ENCODE measurements at regions of chr5 and their contacts with region 1.

Region 1: GRCh38 chr5:65624571-65625555 is at the starts of genes SHLD3 and TRAPPC13:
- DNase-seq: peak; percentile 70 to 96 (median 83)
- ATAC-seq: peak; percentile 72
- H3K4me3 ChIP-seq: peak within 1 kb of the TSS; percentile 80 to 84
- H3K4me3 Mint-ChIP-seq: peak within 1 kb of the TSS; percentile 97
- H3K27ac ChIP-seq: peak within 1 kb of the TSS; percentile 78 to 91
- H3K27ac Mint-ChIP-seq: peak within 1 kb of the TSS; percentile 99
- H3K4me1 ChIP-seq: peaks cover 26% of the 10 kb centered on the region
- H3K4me1 Mint-ChIP-seq: peaks cover 56% of the 10 kb centered on the region
- H3K27me3 ChIP-seq: no peaks in the 10 kb centered on the region
- H3K27me3 Mint-ChIP-seq: no peaks in the 10 kb centered on the region
- CTCF ChIP-seq: no peak
- total RNA-seq, gene SHLD3: 11.6 to 14.5 TPM
- total RNA-seq, gene TRAPPC13: 11.9 to 17.6 TPM

Region 2: DNA sequence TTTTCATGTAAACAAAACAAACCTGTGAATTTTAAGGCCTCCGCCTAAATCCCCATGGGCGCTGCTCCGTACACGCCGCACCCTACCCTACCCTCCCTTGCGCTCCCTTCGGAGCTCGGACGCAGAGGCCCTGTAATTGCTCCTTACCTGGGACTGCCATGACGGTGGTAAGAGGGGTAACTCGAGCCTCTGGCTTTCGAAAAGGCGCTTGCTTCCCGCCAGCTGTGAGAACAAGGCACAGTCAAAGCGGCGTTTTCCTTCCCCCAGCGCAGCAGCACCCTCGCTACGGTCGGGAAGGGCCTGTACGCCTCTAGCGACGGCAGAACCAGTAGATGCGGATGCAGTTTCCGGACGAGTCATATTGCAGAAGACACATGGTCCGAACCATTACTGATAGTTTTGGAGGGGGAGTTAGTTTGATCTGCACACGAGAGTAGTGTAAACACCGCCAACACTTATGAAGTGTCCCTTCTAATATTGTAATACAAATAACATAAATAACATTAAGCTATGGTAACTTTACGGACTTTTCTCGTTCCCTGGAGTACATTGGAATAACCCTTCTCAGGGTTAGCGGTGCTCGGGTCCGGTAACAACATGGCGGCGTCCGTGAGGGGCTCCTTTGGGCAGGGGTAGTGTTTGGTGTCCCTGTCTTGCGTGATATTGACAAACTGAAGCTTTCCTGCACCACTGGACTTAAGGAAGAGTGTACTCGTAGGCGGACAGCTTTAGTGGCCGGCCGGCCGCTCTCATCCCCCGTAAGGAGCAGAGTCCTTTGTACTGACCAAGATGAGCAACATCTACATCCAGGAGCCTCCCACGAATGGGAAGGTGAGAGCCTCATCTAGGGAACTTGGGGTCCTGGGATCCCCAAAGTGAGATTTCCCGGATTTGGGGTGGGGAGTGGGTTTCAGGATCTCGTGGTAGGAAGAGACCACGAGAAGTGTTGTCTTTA is 856.2 kb before region 1 on chr5 and contains the starts of genes CWC27 and SREK1IP1:
- CTCF ChIA-PET with region 1: no interaction called
- POLR2A ChIA-PET with region 1: interaction called, 3 read pairs
- intact Hi-C with region 1: loop called (anchors 2 to 5 kb)
- DNase-seq: peak; percentile 63 to 92 (median 80)
- ATAC-seq: peak; percentile 96
- H3K4me3 ChIP-seq: peak within 1 kb of the TSS; percentile 78 to 93
- H3K4me3 Mint-ChIP-seq: peak within 1 kb of the TSS; percentile 100
- H3K27ac ChIP-seq: peak within 1 kb of the TSS; percentile 85 to 90
- H3K27ac Mint-ChIP-seq: peak within 1 kb of the TSS; percentile 97
- H3K4me1 ChIP-seq: peaks cover 39% of the 10 kb centered on the region
- H3K4me1 Mint-ChIP-seq: peaks cover 66% of the 10 kb centered on the region
- H3K27me3 ChIP-seq: no peaks in the 10 kb centered on the region
- H3K27me3 Mint-ChIP-seq: no peaks in the 10 kb centered on the region
- CTCF ChIP-seq: no peak
- total RNA-seq, gene CWC27: 15.5 to 16.6 TPM
- total RNA-seq, gene SREK1IP1: 20.4 to 26.5 TPM

Region 3: GRCh38 chr5:65035211-65036206 is 589.4 kb before region 1 on chr5:
- CTCF ChIA-PET with region 1: interaction called, 3 read pairs
- POLR2A ChIA-PET with region 1: no interaction called
- intact Hi-C with region 1: loop called (anchors 1 to 10 kb)
- DNase-seq: peak; percentile 62 to 95 (median 83)
- ATAC-seq: peak; percentile 76
- H3K4me3 ChIP-seq: peak overlapping the region; percentile 57 to 60
- H3K4me3 Mint-ChIP-seq: peak overlapping the region; percentile 95
- H3K27ac ChIP-seq: peak overlapping the region; percentile 83 to 96
- H3K27ac Mint-ChIP-seq: peak overlapping the region; percentile 89
- H3K4me1 ChIP-seq: peaks cover 20% of the 10 kb centered on the region
- H3K4me1 Mint-ChIP-seq: peaks cover 32% of the 10 kb centered on the region
- H3K27me3 ChIP-seq: no peaks in the 10 kb centered on the region
- H3K27me3 Mint-ChIP-seq: no peaks in the 10 kb centered on the region
- CTCF ChIP-seq: no peak

Region 4: GRCh38 chr5:65562731-65563701 is 61.8 kb before region 1 on chr5 and contains the starts of genes CENPK and PPWD1:
- CTCF ChIA-PET with region 1: no interaction called
- POLR2A ChIA-PET with region 1: interaction called, 24 read pairs
- intact Hi-C with region 1: loop called (anchors 1 kb)
- DNase-seq: peak; percentile 83 to 98 (median 95)
- ATAC-seq: peak; percentile 97
- H3K4me3 ChIP-seq: peak within 1 kb of the TSS; percentile 74 to 82
- H3K4me3 Mint-ChIP-seq: peak within 1 kb of the TSS; percentile 100
- H3K27ac ChIP-seq: peak within 1 kb of the TSS; percentile 97 to 98
- H3K27ac Mint-ChIP-seq: peak within 1 kb of the TSS; percentile 100
- H3K4me1 ChIP-seq: peaks cover 37% of the 10 kb centered on the region
- H3K4me1 Mint-ChIP-seq: peaks cover 42% of the 10 kb centered on the region
- H3K27me3 ChIP-seq: no peaks in the 10 kb centered on the region
- H3K27me3 Mint-ChIP-seq: no peaks in the 10 kb centered on the region
- CTCF ChIP-seq: no peak
- total RNA-seq, gene CENPK: 5.1 to 5.3 TPM
- total RNA-seq, gene PPWD1: 78.8 to 81.5 TPM

Region 5: DNA sequence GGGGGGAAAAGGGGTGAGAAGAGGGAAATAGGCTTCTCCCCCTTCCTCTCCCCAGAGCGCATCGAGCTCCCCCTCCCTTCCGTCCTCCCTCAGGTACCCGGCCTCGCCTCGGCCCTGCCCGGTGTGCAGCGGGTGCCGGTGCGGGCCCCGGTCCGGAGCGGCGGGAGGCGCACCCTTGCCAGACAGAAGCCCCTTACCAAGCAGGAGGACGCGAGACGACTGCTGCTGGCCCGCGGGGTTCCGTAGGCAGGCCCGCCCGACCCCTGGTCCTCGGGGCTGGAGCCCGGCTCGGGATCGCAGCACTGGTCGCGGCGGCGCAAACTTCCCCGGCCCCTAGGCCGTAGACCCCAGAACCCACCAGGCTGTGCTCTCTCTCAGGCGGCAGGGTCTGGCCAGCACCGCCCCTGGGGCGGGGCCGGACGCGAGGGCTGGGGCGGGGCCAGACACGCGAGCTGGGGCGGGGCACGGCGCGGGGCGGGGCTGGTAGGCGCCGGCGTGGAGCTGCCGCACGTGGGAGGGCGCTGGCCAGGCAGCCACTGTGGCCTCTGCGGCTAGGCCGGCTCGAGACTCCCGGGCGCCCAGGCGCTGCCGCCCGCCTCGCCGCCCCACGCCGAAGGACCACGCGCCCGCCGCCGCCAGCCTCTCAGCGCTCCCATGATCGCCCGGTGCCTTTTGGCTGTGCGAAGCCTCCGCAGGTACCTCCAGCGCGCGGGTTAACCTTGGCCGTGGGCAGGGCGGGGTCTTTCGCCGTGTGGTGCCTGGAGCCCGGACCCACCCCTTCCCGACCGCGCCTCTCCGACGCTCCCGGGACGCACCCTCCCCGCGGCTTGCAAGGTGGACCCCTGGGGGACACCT is 97.1 kb after region 1 on chr5 and contains the starts of genes NLN and SGTB:
- CTCF ChIA-PET with region 1: no interaction called
- POLR2A ChIA-PET with region 1: no interaction called
- intact Hi-C with region 1: loop called (anchors 1 to 2 kb)
- DNase-seq: peak; percentile 72 to 90 (median 84)
- ATAC-seq: peak; percentile 91
- H3K4me3 ChIP-seq: peak within 1 kb of the TSS; percentile 82 to 86
- H3K4me3 Mint-ChIP-seq: peak within 1 kb of the TSS; percentile 89
- H3K27ac ChIP-seq: peak within 1 kb of the TSS; percentile 78 to 86
- H3K27ac Mint-ChIP-seq: peak within 1 kb of the TSS; percentile 94
- H3K4me1 ChIP-seq: peaks cover 44% of the 10 kb centered on the region
- H3K4me1 Mint-ChIP-seq: peaks cover 25% of the 10 kb centered on the region
- H3K27me3 ChIP-seq: no peaks in the 10 kb centered on the region
- H3K27me3 Mint-ChIP-seq: no peaks in the 10 kb centered on the region
- CTCF ChIP-seq: no peak
- total RNA-seq, gene NLN: 1.4 to 1.5 TPM
- total RNA-seq, gene SGTB: 77.9 to 79.5 TPM